Posterior vena cava (tissue), 2 donors: ENCODE measurements at regions of chr11 and their contacts with region 1.

Region 1: GRCh38 chr11:81380395-81380794 is 1353.3 kb downstream of the FAM181B start:
- DNase-seq: no peak

Region 2: GRCh38 chr11:80846982-80847381 is 533.4 kb before region 1 on chr11:
- intact Hi-C with region 1: loop called in 1 of 2 experiments (anchors 5 kb)
- DNase-seq: no peak